ENCODE measurements at regions of chr15 and their contacts with region 1.

Region 1: GRCh38 chr15:51203797-51204196 is 109.1 kb upstream of the TNFAIP8L3 start:
- DNase-seq: no peak
- ATAC-seq: no peak
- H3K4me3 Mint-ChIP-seq: no peak overlapping the region
- H3K27ac Mint-ChIP-seq: no peak overlapping the region
- H3K4me1 Mint-ChIP-seq: no peaks in the 10 kb centered on the region
- H3K27me3 Mint-ChIP-seq: peaks cover 50% of the 10 kb centered on the region

Region 2: DNA sequence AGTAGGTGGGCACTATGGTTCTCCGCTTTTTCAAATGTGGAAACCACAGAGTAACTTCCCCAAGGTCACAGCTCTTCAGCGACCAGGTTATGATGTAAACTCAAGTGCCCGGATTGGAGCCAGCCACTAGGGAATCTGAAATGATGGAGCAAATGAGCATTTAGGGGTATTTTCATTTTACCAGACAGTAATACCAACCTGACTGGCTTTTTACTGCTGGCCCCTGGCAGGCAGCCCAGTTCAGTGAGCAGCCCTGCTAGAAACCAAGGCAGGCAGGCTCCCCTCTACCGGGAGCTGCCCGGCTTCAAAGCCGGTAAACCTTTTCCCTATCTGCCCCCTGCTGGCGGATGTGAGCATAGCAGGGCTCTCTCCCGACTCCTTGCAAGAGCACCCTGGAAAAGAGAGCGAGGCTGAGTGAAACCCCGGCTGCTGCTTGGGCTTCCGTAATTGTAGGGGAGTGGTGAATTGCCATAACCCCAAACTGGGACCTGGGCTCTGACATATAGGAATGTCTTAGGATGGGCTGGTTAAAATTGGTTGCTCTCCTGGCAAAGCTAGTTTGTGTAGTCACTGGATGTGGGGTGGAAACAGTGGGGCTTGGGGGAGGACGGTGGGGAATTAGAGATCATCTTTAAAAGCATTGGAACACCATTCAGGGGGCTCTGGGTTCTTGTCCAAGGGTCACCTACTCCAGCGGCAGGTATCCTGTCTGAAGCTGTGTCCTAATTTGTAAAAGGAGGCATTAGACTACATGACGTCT is 11.1 kb before region 1 on chr15:
- CTCF ChIA-PET with region 1: interaction called, 16 read pairs
- DNase-seq: peak; percentile 84
- ATAC-seq: peak; percentile 64
- H3K4me3 Mint-ChIP-seq: no peak overlapping the region
- H3K27ac Mint-ChIP-seq: no peak overlapping the region
- H3K4me1 Mint-ChIP-seq: peaks cover 1% of the 10 kb centered on the region
- H3K27me3 Mint-ChIP-seq: peaks cover 46% of the 10 kb centered on the region

Region 3: DNA sequence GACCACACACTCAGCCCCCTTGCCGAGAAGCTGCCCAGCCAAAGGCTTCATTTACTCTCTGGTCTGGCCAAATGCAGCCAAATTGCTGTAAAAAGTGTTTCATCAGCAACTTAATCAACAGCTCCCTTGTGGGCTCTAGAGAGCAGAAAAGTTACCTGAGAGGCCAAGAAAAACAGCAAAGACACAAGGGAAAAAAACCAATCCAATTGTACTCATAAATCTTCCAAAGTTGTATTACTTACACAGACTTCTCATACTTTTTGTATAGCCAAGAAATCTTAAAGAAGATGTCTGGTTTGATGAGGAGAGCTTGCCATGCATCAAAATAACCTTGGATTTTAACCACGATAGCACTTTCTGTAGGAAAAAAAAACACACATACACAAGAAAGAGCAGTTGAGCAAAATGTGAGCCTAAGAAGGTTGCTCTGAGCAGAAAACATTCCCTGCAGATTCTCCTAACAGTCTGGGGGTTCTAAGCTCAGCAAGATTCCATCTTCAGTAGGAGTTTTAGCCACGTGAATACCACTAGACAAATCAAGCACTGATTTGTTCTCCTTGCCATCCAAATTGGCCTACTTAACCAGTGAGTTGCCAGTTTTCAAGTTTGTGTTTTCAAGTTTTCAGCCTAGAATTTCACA is 14.6 kb after region 1 on chr15:
- CTCF ChIA-PET with region 1: no interaction called
- DNase-seq: no peak
- ATAC-seq: no peak
- H3K4me3 Mint-ChIP-seq: no peak overlapping the region
- H3K27ac Mint-ChIP-seq: no peak overlapping the region
- H3K4me1 Mint-ChIP-seq: peaks cover 2% of the 10 kb centered on the region
- H3K27me3 Mint-ChIP-seq: peaks cover 67% of the 10 kb centered on the region

Region 4: GRCh38 chr15:51499379-51499976 is 295.7 kb after region 1 on chr15:
- CTCF ChIA-PET with region 1: no interaction called
- DNase-seq: no peak
- ATAC-seq: no peak
- H3K4me3 Mint-ChIP-seq: no peak overlapping the region
- H3K27ac Mint-ChIP-seq: no peak overlapping the region
- H3K4me1 Mint-ChIP-seq: no peaks in the 10 kb centered on the region
- H3K27me3 Mint-ChIP-seq: no peaks in the 10 kb centered on the region

Region 5: GRCh38 chr15:51573894-51574293 is 370.1 kb after region 1 on chr15:
- CTCF ChIA-PET with region 1: no interaction called
- DNase-seq: no peak
- ATAC-seq: no peak
- H3K4me3 Mint-ChIP-seq: no peak overlapping the region
- H3K27ac Mint-ChIP-seq: no peak overlapping the region
- H3K4me1 Mint-ChIP-seq: no peaks in the 10 kb centered on the region
- H3K27me3 Mint-ChIP-seq: no peaks in the 10 kb centered on the region